ENCODE measurements at regions of chr1 and their contacts with region 1.

Region 1: GRCh38 chr1:220300442-220301121 is 28.3 kb upstream of the RAB3GAP2 start:
- DNase-seq: peak; percentile 72

Region 2: DNA sequence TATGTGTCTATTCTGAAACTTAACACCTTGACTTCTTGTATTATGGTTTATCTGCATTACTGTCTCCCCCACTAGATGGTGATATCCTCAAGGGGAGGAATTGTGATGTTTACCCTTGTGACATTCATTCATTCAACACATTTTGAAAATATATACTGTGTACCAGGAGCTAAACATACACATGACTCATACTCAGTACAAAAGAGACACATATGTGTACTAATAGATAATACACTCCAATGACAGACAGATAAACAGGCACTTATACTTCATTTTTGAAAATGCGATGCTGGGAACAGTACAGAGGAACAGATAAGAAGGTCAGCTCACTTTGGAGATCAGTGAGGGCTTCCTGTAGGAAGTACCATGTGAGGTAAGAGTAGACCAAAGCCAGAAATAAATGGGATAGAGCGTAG is 19.4 kb before region 1 on chr1:
- CTCF ChIA-PET with region 1: interaction called, 17 read pairs
- POLR2A ChIA-PET with region 1: interaction called, 4 read pairs
- DNase-seq: peak; percentile 21